ENCODE measurements at regions of chr11 and their contacts with region 1.

Region 1: GRCh38 chr11:134360050-134360835 is 28.5 kb downstream of the GLB1L2 start:
- DNase-seq: peak; percentile 63 to 86 (median 75)
- ATAC-seq: peak; percentile 72 to 96 (median 90)
- H3K4me3 ChIP-seq: no peak overlapping the region
- H3K27ac ChIP-seq: no peak overlapping the region
- H3K4me1 ChIP-seq: peaks cover 0 to 3% (median 0%) of the 10 kb centered on the region in 12 donors
- H3K27me3 ChIP-seq: peaks cover 0 to 56% (median 10%) of the 10 kb centered on the region in 9 donors
- CTCF ChIP-seq: peak; percentile 64 to 86 (median 74)
- POLR2A ChIP-seq: no peak

Region 2: GRCh38 chr11:133842053-133842452 is 518.2 kb before region 1 on chr11:
- intact Hi-C with region 1: no loop called
- DNase-seq: peak in 1 of 5 donors; percentile 38
- ATAC-seq: peak; percentile 41 to 77 (median 66)
- H3K4me3 ChIP-seq: no peak overlapping the region
- H3K27ac ChIP-seq: no peak overlapping the region
- H3K4me1 ChIP-seq: peaks cover 0 to 5% (median 0%) of the 10 kb centered on the region in 12 donors
- H3K27me3 ChIP-seq: peaks cover 0 to 6% (median 0%) of the 10 kb centered on the region in 9 donors
- CTCF ChIP-seq: no peak
- POLR2A ChIP-seq: no peak

Region 3: DNA sequence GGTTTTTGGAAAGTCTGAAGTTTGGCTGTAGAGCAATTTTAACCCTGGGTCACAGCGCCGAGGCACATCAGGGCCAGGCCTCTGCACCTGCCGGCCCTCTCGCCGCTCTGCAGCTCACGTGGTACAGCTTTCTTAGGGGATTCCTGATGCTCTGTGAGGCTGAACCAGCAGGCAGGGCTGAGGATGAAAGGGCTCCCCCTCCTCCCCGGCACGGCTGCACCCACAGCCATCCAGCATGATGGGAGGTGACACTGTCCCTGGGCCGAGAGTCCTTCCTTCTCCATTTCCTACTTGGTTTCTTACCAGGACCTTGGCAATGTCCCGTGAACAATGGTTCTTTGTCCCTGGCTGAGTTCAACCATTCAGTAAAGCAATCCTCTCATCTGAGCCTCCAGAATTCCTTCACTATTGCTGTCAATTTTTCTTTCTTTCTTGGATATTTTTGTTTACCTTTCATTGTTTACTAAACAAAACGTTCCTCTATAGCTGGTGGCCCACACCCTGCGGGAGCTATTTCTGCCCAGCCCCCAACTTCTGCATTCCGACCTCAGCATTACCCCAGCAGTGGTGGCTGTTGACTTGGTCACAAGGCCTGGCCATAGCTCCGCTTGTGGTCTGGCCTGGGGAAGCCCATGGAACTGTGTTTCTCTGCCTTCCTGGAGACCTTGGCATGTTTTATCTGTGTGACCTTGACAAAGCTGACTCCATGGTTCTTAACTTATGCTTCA is 224.6 kb after region 1 on chr11:
- intact Hi-C with region 1: loop called in 1 of 10 experiments (anchors 10 kb)
- DNase-seq: peak in 3 of 5 donors; percentile 35 to 49 (median 39)
- ATAC-seq: peak in 2 of 4 donors; percentile 54 to 63
- H3K4me3 ChIP-seq: no peak overlapping the region
- H3K27ac ChIP-seq: no peak overlapping the region
- H3K4me1 ChIP-seq: peaks cover 0 to 31% (median 9%) of the 10 kb centered on the region in 12 donors
- H3K27me3 ChIP-seq: peaks cover 0 to 42% (median 12%) of the 10 kb centered on the region in 9 donors
- CTCF ChIP-seq: no peak
- POLR2A ChIP-seq: no peak

Region 4: GRCh38 chr11:134634897-134635831 is 274.9 kb after region 1 on chr11:
- intact Hi-C with region 1: loop called in 2 of 10 experiments (anchors 10 kb)
- DNase-seq: peak in 1 of 5 donors; percentile 16
- ATAC-seq: no peak
- H3K4me3 ChIP-seq: no peak overlapping the region
- H3K27ac ChIP-seq: no peak overlapping the region
- H3K4me1 ChIP-seq: no peaks in the 10 kb centered on the region
- H3K27me3 ChIP-seq: peaks cover 0 to 57% (median under 1%) of the 10 kb centered on the region in 9 donors
- CTCF ChIP-seq: peak in 1 of 12 donors; percentile 27
- POLR2A ChIP-seq: no peak